T-cell (primary cell): ENCODE measurements at regions of chr1 and their contacts with region 1.

Region 1: GRCh38 chr1:246705368-246705767 is 18.8 kb upstream of the SCCPDH start:
- DNase-seq: no peak
- ATAC-seq: no peak
- H3K4me3 ChIP-seq: no peak overlapping the region
- H3K4me3 Mint-ChIP-seq: no peak overlapping the region
- H3K27ac ChIP-seq: no peak overlapping the region
- H3K27ac Mint-ChIP-seq: no peak overlapping the region
- H3K4me1 ChIP-seq: no peaks in the 10 kb centered on the region
- H3K4me1 Mint-ChIP-seq: peaks cover 0 to 6% (median 0%) of the 10 kb centered on the region in 3 donors
- H3K27me3 ChIP-seq: peaks cover 0 to 2% of the 10 kb centered on the region in 2 experiments
- H3K27me3 Mint-ChIP-seq: peaks cover 4 to 5% of the 10 kb centered on the region in 2 donors

Region 2: DNA sequence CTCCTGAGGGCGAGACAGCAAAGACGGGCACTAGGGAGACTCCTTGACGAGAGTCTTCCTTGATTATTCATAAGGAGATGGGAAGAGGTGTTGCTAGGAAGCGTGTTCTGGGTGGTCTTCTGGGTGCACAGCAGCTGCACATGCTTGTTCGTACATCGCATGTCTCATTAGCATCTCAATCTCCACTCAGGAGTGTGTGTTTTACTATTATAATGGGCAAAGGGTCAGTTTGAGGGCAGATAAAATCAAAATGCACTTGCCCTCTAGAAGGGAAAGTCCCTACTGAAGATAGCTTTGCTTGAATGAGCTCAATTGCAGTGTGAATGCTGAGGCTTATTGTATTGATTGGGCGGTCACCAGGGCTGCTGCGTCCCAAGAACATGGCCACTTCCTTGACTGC is 31.3 kb before region 1 on chr1:
- CTCF ChIA-PET with region 1: no interaction called
- POLR2A ChIA-PET with region 1: interaction called in 1 of 2 experiments, 15 read pairs
- DNase-seq: no peak
- ATAC-seq: no peak
- H3K4me3 ChIP-seq: no peak overlapping the region
- H3K4me3 Mint-ChIP-seq: no peak overlapping the region
- H3K27ac ChIP-seq: no peak overlapping the region
- H3K27ac Mint-ChIP-seq: no peak overlapping the region
- H3K4me1 ChIP-seq: no peaks in the 10 kb centered on the region
- H3K4me1 Mint-ChIP-seq: no peaks in the 10 kb centered on the region
- H3K27me3 ChIP-seq: no peaks in the 10 kb centered on the region
- H3K27me3 Mint-ChIP-seq: no peaks in the 10 kb centered on the region

Region 3: DNA sequence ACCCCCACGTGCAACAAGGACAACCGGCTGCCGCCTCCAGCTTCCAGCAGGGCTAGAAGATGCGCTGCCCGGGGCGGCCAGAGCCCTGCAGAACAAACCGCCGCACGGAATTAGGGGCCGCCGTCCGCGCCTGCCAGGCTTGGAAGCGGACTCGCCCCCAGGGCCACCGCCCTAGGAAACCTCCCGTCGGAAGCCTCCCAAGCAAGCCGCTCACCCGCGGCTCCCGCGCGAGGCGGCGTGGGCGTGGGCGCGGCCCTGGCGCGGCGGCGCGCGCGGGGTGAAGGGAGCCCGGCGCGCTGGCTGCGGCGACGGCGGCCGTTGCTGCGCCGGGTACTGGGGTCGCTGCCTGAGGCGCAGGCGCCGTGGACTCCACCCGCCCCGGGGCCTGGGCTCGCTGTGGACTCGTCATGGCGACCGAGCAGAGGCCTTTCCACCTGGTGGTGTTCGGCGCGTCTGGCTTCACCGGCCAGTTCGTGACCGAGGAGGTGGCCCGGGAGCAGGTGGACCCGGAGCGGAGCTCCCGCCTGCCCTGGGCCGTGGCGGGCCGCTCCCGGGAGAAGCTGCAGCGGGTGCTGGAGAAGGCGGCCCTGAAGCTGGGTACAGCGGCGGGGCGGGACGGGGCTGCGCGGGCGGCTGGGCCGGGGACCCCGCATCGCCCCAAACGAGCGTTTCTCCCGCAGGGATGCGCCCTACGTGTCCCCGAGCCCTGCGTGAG is 18.8 kb after region 1 on chr1 and contains the start of gene SCCPDH:
- CTCF ChIA-PET with region 1: no interaction called
- POLR2A ChIA-PET with region 1: no interaction called
- DNase-seq: peak; percentile 18 to 71 (median 48)
- ATAC-seq: peak; percentile 92 to 93 (median 93)
- H3K4me3 ChIP-seq: peak within 1 kb of the TSS; percentile 45 to 91
- H3K4me3 Mint-ChIP-seq: peak within 1 kb of the TSS; percentile 82 to 91 (median 86)
- H3K27ac ChIP-seq: no peak within 1 kb of the TSS
- H3K27ac Mint-ChIP-seq: peak within 1 kb of the TSS; percentile 60 to 61
- H3K4me1 ChIP-seq: peaks cover 4 to 11% of the 10 kb centered on the region in 2 experiments
- H3K4me1 Mint-ChIP-seq: peaks cover 8 to 11% (median 9%) of the 10 kb centered on the region in 3 donors
- H3K27me3 ChIP-seq: peaks cover 0 to 19% of the 10 kb centered on the region in 2 experiments
- H3K27me3 Mint-ChIP-seq: peaks cover 0 to 5% of the 10 kb centered on the region in 2 donors
- total RNA-seq, gene SCCPDH: 3.7 to 6.2 (median 4.5) TPM